ENCODE measurements at regions of chr5 and their contacts with region 1.

Region 1: DNA sequence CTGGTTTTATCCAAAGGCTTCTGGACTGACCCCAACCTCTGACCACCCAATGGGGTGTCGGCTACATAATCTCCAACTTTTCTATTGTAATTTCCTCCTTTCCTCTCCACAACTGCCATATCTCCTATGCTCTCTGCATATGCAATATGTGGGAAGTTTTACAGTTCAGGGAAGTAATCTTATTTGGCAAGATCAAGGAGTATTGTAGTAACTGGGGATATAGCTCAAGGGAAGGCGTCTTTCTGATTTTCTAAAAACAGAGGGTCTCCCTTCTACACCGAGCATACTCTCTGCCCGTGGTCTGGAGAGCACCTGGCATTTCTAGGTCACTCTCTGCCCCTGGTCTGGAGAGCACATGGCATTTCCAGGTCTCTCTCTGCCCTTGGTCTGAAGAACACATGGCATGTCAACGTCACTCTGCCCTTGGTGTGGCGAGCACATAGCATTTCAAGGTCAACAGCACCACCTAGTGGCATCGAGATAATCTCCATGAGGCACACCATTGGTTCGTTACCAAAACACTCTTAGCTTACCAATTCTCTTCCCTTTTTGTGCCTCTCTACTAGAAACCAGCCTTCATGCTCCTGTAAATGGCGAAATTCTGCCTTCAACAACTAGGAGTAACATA is 616.4 kb upstream of the NUDT12 start:
- DNase-seq: no peak

Region 2: DNA sequence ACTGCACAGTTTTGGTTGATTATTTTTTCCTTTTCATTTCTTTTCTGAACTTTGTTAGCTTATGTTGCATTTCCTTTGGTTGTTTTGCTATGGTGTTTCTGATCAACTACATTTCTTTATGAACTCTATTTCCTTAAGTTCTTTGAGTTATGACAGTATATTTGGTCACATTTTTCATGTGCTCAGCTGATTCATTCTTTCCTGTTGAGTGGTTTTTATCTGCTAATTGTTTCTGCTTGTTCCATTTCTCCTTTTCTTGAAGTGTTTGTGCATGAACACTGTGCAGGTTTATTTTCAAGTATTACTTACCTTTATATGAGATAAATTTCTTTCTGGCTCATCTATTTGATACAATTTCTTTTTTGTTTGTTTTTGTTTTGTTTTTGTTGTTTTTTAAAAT is 971.3 kb before region 1 on chr5:
- intact Hi-C with region 1: no loop called
- DNase-seq: no peak

Region 3: DNA sequence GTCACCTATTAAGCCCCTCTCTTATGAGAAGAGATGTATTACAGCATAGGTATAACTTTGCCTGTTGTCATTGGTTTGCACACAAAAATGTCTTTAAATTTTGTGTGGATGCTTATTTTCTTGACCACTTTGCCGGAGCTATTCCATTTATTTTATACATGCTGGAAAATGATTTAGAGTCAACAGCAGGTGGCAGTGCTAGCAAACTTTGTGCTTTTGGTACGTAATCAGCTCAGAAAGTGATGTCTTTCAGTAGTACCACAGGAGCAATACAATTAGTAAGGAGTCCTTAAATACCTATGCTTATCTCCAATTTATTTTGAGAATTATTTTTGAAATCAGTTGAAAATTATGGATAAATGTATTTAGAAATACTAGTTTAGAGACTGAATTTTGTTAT is 596.6 kb before region 1 on chr5:
- intact Hi-C with region 1: loop called (anchors 2 kb)
- DNase-seq: no peak

Region 4: GRCh38 chr5:103808464-103809106 is 370.4 kb before region 1 on chr5:
- intact Hi-C with region 1: loop called (anchors 10 kb)
- DNase-seq: no peak

Region 5: DNA sequence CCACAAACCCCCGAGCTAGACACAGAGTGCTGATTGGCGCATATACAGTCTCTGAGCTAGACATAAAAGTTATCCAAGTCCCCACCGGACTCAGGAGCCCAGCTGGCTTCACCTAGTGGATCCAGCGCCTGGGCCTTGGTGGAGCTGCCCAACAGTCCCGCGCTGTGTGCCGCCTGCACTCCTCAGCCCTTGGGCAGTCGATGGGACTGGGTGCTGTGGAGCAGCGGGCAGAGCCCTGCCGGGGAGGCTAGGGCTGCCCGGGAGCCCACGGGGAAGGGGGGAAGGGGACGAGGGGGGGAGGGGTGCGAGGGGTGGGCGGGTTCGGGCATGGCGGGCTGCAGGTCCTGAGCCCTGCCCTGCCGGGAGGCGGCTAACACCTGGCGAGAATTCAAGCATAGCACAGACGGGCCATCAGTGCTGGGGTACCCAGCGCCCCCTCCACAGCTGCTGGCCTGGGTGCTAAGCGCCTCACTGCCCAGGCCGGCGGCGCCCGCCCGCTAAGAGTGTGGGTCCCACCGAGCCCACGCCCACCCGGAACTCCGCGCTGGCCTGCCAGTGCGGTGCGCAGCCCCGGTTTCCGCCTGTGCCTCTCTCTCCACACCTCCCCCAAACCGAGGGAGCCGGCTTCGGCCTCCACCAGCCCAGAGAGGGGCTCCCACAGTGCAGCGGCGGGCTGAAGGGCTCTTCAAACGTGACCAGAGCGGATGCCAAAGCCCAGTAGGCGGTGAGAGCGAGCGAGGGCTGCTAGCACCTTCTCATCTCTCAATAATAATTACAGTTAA is 225.2 kb before region 1 on chr5:
- intact Hi-C with region 1: no loop called
- DNase-seq: no peak